AG04449 (cell line): ENCODE measurements at regions of chr10 and their contacts with region 1.

Region 1: DNA sequence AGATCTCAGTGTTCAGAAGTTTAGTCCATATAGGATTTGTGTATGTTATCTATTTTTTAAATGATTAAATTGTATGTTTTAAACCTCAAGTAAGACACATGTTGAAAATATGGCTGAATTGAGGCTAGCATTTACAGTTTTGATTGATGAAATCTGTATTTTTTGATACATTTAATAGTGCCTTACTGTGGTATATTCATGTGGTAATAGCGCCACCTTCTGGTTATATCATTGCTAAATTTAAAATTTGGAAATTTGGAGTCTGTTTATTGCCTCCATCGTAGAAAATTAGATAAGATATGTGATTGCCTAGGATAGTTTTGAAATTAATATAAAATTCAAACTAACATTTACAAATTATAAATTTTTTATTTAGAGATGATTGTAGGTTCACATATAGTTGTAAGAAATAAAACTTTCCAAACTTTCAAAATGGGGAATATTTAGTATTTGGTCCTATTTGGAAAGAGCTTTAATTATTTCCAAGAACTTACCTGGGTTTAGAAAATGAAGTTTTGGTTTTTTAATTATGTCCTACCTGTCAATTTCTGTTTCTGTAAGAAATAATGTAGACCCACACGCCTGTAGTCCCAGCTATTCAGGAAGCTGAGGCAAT is 19.1 kb upstream of the ARMS2 start:
- DNase-seq: no peak
- H3K4me3 ChIP-seq: no peak overlapping the region
- CTCF ChIP-seq: no peak

Region 2: GRCh38 chr10:122267849-122268737 is 167.2 kb before region 1 on chr10:
- CTCF ChIA-PET with region 1: interaction called, 30 read pairs
- POLR2A ChIA-PET with region 1: no interaction called
- DNase-seq: no peak
- H3K4me3 ChIP-seq: no peak overlapping the region
- CTCF ChIP-seq: peak; percentile 95

Region 3: GRCh38 chr10:122298598-122299301 is 136.6 kb before region 1 on chr10:
- CTCF ChIA-PET with region 1: interaction called, 203 read pairs
- POLR2A ChIA-PET with region 1: no interaction called
- DNase-seq: no peak
- H3K4me3 ChIP-seq: peak overlapping the region; percentile 43
- CTCF ChIP-seq: peak; percentile 89

Region 4: GRCh38 chr10:122342293-122343134 is 92.8 kb before region 1 on chr10:
- CTCF ChIA-PET with region 1: interaction called, 99 read pairs
- POLR2A ChIA-PET with region 1: no interaction called
- DNase-seq: peak; percentile 5
- H3K4me3 ChIP-seq: no peak overlapping the region
- CTCF ChIP-seq: peak; percentile 60

Region 5: GRCh38 chr10:122413325-122413724 is 22.0 kb before region 1 on chr10:
- CTCF ChIA-PET with region 1: interaction called, 28 read pairs
- POLR2A ChIA-PET with region 1: no interaction called
- DNase-seq: no peak
- H3K4me3 ChIP-seq: no peak overlapping the region
- CTCF ChIP-seq: no peak

Region 6: GRCh38 chr10:122446668-122447423 is 11.5 kb after region 1 on chr10:
- CTCF ChIA-PET with region 1: interaction called, 15 read pairs
- POLR2A ChIA-PET with region 1: interaction called, 4 read pairs
- DNase-seq: no peak
- H3K4me3 ChIP-seq: no peak overlapping the region
- CTCF ChIP-seq: no peak